Thyroid gland (tissue), 4 donors: ENCODE measurements at regions of chr1 and their contacts with region 1.

Region 1: DNA sequence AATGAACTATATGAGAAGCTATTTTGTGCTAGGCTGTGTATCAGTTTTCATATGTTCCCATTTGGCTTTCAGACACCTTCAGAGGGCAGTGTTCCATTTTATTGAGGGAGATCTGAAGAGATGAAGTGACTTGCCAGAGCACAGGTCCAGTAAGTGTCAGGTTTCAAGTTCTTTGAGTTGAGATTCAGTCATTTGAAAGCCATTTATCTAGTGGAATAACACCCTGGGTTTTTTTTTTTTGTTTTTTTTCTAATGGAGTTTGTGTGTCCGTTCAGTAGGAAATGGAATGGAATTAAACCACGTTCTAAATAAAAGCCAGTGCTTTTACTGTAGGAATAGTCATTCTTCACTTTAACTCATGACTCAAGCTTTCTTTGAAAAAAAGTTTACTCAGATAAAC is 652.9 kb upstream of the USP24 start:
- DNase-seq: peak; percentile 21 to 23
- H3K4me3 ChIP-seq: no peak overlapping the region
- H3K27ac ChIP-seq: peak overlapping the region; percentile 23 to 71 (median 66)
- H3K4me1 ChIP-seq: peaks cover 38 to 48% of the 10 kb centered on the region in 2 donors
- H3K27me3 ChIP-seq: no peaks in the 10 kb centered on the region
- CTCF ChIP-seq: peak in 4 of 6 experiments; percentile 21 to 48 (median 39)
- POLR2A ChIP-seq: no peak

Region 2: DNA sequence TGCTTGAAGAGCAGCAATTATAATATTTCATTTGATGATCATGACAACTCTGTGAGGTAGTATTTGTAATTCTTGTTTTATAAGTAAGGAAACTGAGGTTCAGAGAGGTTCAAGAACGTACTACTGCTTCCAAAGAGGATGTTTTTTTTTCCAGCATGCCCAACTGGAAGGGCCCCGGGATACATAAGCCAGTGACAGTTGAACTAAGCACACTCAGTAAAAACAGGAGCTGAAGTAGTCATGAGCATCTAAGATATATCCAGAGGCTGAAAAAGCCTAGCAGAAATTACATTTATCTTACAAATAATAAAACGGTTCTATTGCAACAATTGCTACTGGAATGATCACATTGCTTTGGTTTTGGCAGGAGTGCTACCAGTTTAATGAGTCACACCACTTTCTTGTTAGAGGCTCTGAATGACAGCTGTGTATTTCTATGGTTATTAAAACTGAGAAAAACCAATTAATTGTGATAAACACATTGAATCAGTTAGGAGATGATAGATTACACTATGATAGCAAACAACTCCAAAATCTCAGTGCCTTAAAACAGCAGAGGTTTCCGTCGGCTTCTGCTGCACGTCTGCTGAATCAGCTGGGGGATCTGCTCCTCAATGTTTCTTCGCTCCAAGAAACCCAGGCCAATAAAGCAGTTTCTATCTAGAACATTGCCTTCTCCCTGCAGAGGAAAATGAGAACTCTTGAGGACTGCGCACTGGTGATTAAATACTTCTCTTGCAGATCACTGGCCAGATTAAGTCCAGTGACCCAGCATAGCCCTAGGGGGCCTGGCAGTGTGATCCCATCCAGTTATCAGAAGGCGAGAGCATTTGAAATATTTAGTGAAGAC is 188.6 kb after region 1 on chr1:
- intact Hi-C with region 1: loop called (anchors 10 kb)
- DNase-seq: peak; percentile 31 to 33
- H3K4me3 ChIP-seq: no peak overlapping the region
- H3K27ac ChIP-seq: peak overlapping the region; percentile 25 to 68 (median 29)
- H3K4me1 ChIP-seq: peaks cover 42 to 46% of the 10 kb centered on the region in 2 donors
- H3K27me3 ChIP-seq: no peaks in the 10 kb centered on the region
- CTCF ChIP-seq: no peak
- POLR2A ChIP-seq: no peak

Region 3: DNA sequence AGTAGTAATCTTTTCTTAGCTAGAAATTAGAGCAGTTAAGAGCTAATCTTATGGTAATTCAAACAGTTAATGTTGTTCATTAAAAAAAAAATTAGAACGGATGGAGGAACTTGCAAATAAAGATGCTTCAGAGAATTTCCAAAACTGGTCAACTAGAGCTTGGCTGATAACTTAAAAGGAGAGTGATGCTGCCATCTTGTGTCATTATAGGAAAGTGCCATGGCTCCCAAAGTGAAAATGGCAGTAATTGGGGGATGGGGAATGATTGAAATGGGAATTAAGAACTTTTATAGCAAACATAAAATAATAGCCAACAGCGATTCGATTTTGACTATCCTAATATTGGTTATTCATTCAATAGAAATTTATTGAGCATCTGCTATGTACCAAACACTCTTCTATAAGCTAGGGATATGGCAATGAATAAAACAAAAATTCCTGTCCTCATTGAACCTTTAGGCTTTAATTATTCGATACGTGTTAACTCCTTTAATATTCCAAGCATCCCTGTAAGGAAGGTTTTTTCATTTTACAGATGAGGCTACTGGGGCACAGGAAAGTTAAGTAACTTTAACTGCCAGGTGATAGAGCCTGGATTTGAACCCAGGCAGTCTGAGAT is 717.0 kb after region 1 on chr1:
- intact Hi-C with region 1: loop called (anchors 10 kb)
- DNase-seq: peak; percentile 21 to 32
- H3K4me3 ChIP-seq: no peak overlapping the region
- H3K27ac ChIP-seq: no peak overlapping the region
- H3K4me1 ChIP-seq: peaks cover 16 to 28% of the 10 kb centered on the region in 2 donors
- H3K27me3 ChIP-seq: no peaks in the 10 kb centered on the region
- CTCF ChIP-seq: peak; percentile 51 to 98 (median 82)
- POLR2A ChIP-seq: no peak